ENCODE measurements at regions of chr15 and their contacts with region 1.

Region 1: DNA sequence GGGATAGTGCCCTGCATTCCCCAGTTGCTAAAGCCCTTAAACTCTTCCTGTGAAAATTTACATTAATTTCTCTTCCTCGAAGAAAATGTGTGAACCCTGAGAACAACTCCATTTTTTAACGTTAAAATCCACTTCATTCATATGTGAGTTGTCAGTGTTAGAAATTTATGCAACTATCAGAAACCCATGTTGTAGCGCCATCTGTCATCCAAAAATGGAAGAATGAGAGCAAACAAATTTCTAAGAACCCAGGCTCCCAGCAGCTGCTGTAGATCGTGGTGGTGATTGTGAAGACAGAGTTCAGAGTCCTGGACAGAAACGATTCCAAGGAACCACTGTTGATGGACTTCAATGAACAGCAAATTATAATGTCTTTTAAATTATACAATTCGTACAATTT is 179.7 kb upstream of the NDN start:
- DNase-seq: peak in 1 of 4 donors; percentile 39
- ATAC-seq: no peak
- H3K4me3 ChIP-seq: no peak overlapping the region
- H3K27ac ChIP-seq: no peak overlapping the region
- H3K4me1 ChIP-seq: no peaks in the 10 kb centered on the region
- H3K27me3 ChIP-seq: peaks cover 0 to 17% of the 10 kb centered on the region in 2 donors
- CTCF ChIP-seq: no peak

Region 2: GRCh38 chr15:23642413-23643044 is 224.3 kb before region 1 on chr15:
- intact Hi-C with region 1: loop called in 1 of 2 experiments (anchors 10 kb)
- DNase-seq: peak in 3 of 4 donors; percentile 42 to 78 (median 64)
- ATAC-seq: peak; percentile 96
- H3K4me3 ChIP-seq: no peak overlapping the region
- H3K27ac ChIP-seq: no peak overlapping the region
- H3K4me1 ChIP-seq: no peaks in the 10 kb centered on the region
- H3K27me3 ChIP-seq: peaks cover 0 to 23% of the 10 kb centered on the region in 2 donors
- CTCF ChIP-seq: peak; percentile 78 to 87

Region 3: GRCh38 chr15:23758891-23759290 is 107.9 kb before region 1 on chr15:
- intact Hi-C with region 1: no loop called
- DNase-seq: peak in 2 of 4 donors; percentile 36 to 57
- ATAC-seq: no peak
- H3K4me3 ChIP-seq: no peak overlapping the region
- H3K27ac ChIP-seq: no peak overlapping the region
- H3K4me1 ChIP-seq: no peaks in the 10 kb centered on the region
- H3K27me3 ChIP-seq: no peaks in the 10 kb centered on the region
- CTCF ChIP-seq: no peak

Measured in left lung (tissue), 14 donors.